CD4-positive, alpha-beta T cell (primary cell): ENCODE measurements at regions of chr16 and their contacts with region 1.

Region 1: DNA sequence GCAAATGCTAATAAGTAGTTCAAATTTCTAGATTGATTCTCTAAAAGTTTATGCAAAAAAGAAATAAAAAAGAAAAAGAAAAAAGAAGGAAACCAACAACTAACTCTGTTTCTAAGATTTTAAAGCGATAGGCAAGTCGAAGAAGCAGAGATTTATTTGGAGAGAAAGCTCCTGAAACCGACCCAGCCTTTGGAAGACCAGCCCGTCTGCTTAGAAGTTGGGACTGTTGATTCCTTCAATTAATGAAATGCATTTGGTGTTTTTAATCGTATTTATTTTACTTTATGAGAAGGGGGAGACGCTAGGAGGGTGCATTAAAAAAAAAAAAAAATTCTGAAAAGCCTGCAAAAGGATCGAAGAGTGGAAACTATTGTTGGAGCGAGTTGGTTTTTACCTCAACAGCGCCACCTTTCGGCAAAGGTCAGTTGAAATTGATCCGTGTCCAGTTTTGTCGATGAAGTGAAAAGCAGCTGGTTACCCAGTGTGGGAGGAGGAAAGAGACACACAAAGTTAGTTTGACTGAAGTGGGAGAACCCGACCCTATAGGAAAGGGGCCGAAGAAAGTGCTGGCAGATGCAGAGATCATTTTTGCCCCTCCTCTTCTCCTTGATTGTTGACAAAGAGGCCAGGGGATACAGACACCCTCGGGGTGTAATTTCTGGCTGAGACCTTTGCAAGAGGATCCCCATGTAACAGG is 1.5 kb upstream of the MAF start:
- DNase-seq: peak; percentile 71 to 92 (median 82)
- ATAC-seq: peak; percentile 6
- H3K4me3 ChIP-seq: peak overlapping the region; percentile 72
- H3K4me3 Mint-ChIP-seq: peak overlapping the region; percentile 98
- H3K27ac ChIP-seq: peak overlapping the region; percentile 27 to 32
- H3K27ac Mint-ChIP-seq: peak overlapping the region; percentile 93
- H3K4me1 ChIP-seq: peaks cover 20% of the 10 kb centered on the region
- H3K4me1 Mint-ChIP-seq: peaks cover 32% of the 10 kb centered on the region
- H3K27me3 ChIP-seq: no peaks in the 10 kb centered on the region
- H3K27me3 Mint-ChIP-seq: peaks cover 11% of the 10 kb centered on the region
- CTCF ChIP-seq: peak; percentile 91

Region 2: GRCh38 chr16:77722309-77723107 is 1879.6 kb before region 1 on chr16 and contains the start of gene NUDT7:
- CTCF ChIA-PET with region 1: no interaction called
- POLR2A ChIA-PET with region 1: no interaction called
- intact Hi-C with region 1: loop called in 1 of 2 experiments (anchors 10 kb)
- DNase-seq: peak; percentile 85 to 100 (median 95)
- ATAC-seq: peak; percentile 93
- H3K4me3 ChIP-seq: peak within 1 kb of the TSS; percentile 95
- H3K4me3 Mint-ChIP-seq: peak within 1 kb of the TSS; percentile 94
- H3K27ac ChIP-seq: peak within 1 kb of the TSS; percentile 46 to 59
- H3K27ac Mint-ChIP-seq: peak within 1 kb of the TSS; percentile 87
- H3K4me1 ChIP-seq: peaks cover 19% of the 10 kb centered on the region
- H3K4me1 Mint-ChIP-seq: peaks cover 17% of the 10 kb centered on the region
- H3K27me3 ChIP-seq: no peaks in the 10 kb centered on the region
- H3K27me3 Mint-ChIP-seq: no peaks in the 10 kb centered on the region
- CTCF ChIP-seq: no peak
- total RNA-seq, gene NUDT7: 0.93 to 1.5 TPM

Region 3: DNA sequence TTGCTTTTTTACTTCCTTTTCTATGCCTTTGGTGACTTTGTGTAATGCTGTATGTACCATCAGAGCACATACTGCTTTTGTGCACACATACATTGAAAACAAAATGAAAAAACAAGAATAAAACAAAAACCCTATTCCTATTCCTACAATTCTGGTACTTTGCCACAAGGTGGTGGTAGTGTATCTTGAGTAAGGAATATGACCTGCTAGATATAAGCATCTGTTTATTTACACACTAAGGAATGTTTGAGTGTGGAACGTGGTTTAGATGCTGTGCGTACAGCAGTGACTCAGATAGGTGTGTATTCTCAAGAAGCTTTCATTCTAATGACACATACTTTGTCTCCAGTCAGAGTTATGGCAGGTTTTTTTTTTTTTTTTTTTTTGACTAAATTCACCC is 896.4 kb before region 1 on chr16:
- CTCF ChIA-PET with region 1: no interaction called
- POLR2A ChIA-PET with region 1: interaction called, 3 read pairs
- intact Hi-C with region 1: loop called in 1 of 2 experiments (anchors 5 kb)
- DNase-seq: peak in 4 of 14 experiments; percentile 13 to 65 (median 60)
- ATAC-seq: peak; percentile 58
- H3K4me3 ChIP-seq: no peak overlapping the region
- H3K4me3 Mint-ChIP-seq: no peak overlapping the region
- H3K27ac ChIP-seq: no peak overlapping the region
- H3K27ac Mint-ChIP-seq: no peak overlapping the region
- H3K4me1 ChIP-seq: no peaks in the 10 kb centered on the region
- H3K4me1 Mint-ChIP-seq: no peaks in the 10 kb centered on the region
- H3K27me3 ChIP-seq: no peaks in the 10 kb centered on the region
- H3K27me3 Mint-ChIP-seq: no peaks in the 10 kb centered on the region
- CTCF ChIP-seq: peak; percentile 50

Region 4: GRCh38 chr16:78925083-78925767 is 676.9 kb before region 1 on chr16:
- CTCF ChIA-PET with region 1: no interaction called
- POLR2A ChIA-PET with region 1: no interaction called
- intact Hi-C with region 1: loop called in 1 of 2 experiments (anchors 5 kb)
- DNase-seq: peak in 7 of 14 experiments; percentile 6 to 54 (median 36)
- ATAC-seq: no peak
- H3K4me3 ChIP-seq: no peak overlapping the region
- H3K4me3 Mint-ChIP-seq: no peak overlapping the region
- H3K27ac ChIP-seq: no peak overlapping the region
- H3K27ac Mint-ChIP-seq: no peak overlapping the region
- H3K4me1 ChIP-seq: peaks cover 3% of the 10 kb centered on the region
- H3K4me1 Mint-ChIP-seq: peaks cover 10% of the 10 kb centered on the region
- H3K27me3 ChIP-seq: no peaks in the 10 kb centered on the region
- H3K27me3 Mint-ChIP-seq: no peaks in the 10 kb centered on the region
- CTCF ChIP-seq: peak; percentile 36

Region 5: DNA sequence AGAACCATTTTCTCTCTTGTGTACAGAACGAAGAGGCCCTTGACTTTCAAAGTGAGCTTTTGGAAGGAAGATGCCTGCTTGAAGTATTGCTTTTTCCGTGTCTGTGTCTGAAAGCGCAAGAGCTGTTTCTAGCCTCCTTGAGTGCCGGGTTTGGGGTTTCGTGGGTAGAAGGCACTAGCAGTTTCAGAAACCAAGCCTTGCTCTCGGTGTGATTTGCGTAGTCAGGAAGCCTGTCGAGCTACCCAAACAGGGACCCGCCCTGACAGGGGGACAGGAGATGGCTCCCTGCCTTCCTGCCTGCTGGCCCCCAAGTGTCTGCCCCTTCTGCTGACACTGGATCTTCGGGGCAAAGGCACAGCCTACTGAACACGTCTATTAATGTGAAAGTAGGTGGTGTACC is 323.6 kb before region 1 on chr16:
- CTCF ChIA-PET with region 1: no interaction called
- POLR2A ChIA-PET with region 1: interaction called, 11 read pairs
- intact Hi-C with region 1: loop called (anchors 2 to 5 kb)
- DNase-seq: peak; percentile 37 to 91 (median 54)
- ATAC-seq: peak; percentile 89
- H3K4me3 ChIP-seq: peak overlapping the region; percentile 17
- H3K4me3 Mint-ChIP-seq: peak overlapping the region; percentile 35
- H3K27ac ChIP-seq: peak overlapping the region in 1 of 2 donors; percentile 71
- H3K27ac Mint-ChIP-seq: peak overlapping the region; percentile 88
- H3K4me1 ChIP-seq: peaks cover 58% of the 10 kb centered on the region
- H3K4me1 Mint-ChIP-seq: peaks cover 71% of the 10 kb centered on the region
- H3K27me3 ChIP-seq: no peaks in the 10 kb centered on the region
- H3K27me3 Mint-ChIP-seq: peaks cover 6% of the 10 kb centered on the region
- CTCF ChIP-seq: no peak

Region 6: DNA sequence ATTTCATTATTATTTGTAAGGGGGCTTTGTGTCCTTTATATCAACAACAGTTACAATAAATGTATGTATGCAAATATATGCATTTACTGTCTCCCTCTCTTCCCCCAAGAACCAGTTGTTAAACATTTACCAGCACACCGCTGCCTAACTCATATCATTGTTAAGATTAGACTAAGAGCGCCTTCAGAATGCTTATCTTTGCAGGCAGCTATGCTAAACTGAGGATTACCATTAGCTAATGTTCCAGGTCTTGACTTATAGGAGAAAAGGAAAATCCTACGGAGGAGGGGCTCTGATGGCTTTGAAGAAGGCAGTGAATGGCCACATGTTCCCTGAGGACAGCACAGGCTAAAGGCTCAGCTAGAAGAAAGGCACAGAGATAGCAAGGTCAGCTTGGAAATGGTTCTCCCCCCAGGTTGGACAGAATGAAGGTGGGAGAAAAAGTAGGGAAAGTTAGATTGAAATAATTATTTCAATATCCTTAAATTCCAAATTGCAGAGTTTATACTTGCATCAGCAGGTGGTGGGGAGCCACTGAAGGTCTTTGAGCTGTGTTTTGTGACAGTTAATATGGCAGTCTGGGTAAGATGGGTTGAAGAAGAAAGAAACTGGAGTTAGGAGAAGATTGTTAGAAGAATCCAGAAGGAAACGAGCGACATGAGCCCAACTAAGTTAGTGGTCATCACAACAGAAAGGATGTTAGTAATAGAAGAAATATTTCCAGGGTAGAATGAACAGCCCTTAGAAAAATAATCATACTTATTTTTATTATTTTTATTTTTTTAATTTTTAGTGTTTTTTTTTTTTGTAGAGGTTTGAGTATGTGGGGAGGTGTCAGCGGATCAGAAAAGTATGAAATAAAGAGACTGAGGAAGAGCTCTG is 85.4 kb after region 1 on chr16:
- CTCF ChIA-PET with region 1: no interaction called
- POLR2A ChIA-PET with region 1: no interaction called
- intact Hi-C with region 1: no loop called
- DNase-seq: no peak
- ATAC-seq: no peak
- H3K4me3 ChIP-seq: no peak overlapping the region
- H3K4me3 Mint-ChIP-seq: no peak overlapping the region
- H3K27ac ChIP-seq: no peak overlapping the region
- H3K27ac Mint-ChIP-seq: no peak overlapping the region
- H3K4me1 ChIP-seq: no peaks in the 10 kb centered on the region
- H3K4me1 Mint-ChIP-seq: no peaks in the 10 kb centered on the region
- H3K27me3 ChIP-seq: no peaks in the 10 kb centered on the region
- H3K27me3 Mint-ChIP-seq: peaks cover 4% of the 10 kb centered on the region
- CTCF ChIP-seq: no peak

Region 7: GRCh38 chr16:79770244-79771064 is 168.4 kb after region 1 on chr16:
- CTCF ChIA-PET with region 1: interaction called, 5 read pairs
- POLR2A ChIA-PET with region 1: interaction called, 3 read pairs
- intact Hi-C with region 1: loop called in 1 of 2 experiments (anchors 5 kb)
- DNase-seq: peak; percentile 12 to 90 (median 53)
- ATAC-seq: peak; percentile 91
- H3K4me3 ChIP-seq: peak overlapping the region; percentile 79
- H3K4me3 Mint-ChIP-seq: peak overlapping the region; percentile 91
- H3K27ac ChIP-seq: no peak overlapping the region
- H3K27ac Mint-ChIP-seq: no peak overlapping the region
- H3K4me1 ChIP-seq: peaks cover 12% of the 10 kb centered on the region
- H3K4me1 Mint-ChIP-seq: peaks cover 16% of the 10 kb centered on the region
- H3K27me3 ChIP-seq: no peaks in the 10 kb centered on the region
- H3K27me3 Mint-ChIP-seq: no peaks in the 10 kb centered on the region
- CTCF ChIP-seq: no peak